ENCODE measurements at regions of chr6 and their contacts with region 1.

Region 1: GRCh38 chr6:116087437-116088027 is 13.1 kb upstream of the NT5DC1 start:
- DNase-seq: no peak
- H3K4me3 ChIP-seq: no peak overlapping the region
- CTCF ChIP-seq: no peak

Region 2: GRCh38 chr6:116010790-116011401 is 76.6 kb before region 1 on chr6:
- CTCF ChIA-PET with region 1: interaction called, 54 read pairs
- POLR2A ChIA-PET with region 1: no interaction called
- DNase-seq: peak; percentile 12
- H3K4me3 ChIP-seq: no peak overlapping the region
- CTCF ChIP-seq: peak; percentile 75

Region 3: GRCh38 chr6:116060572-116061283 is 26.8 kb before region 1 on chr6 and contains the start of gene FRK:
- CTCF ChIA-PET with region 1: interaction called, 15 read pairs
- POLR2A ChIA-PET with region 1: no interaction called
- DNase-seq: no peak
- H3K4me3 ChIP-seq: peak within 1 kb of the TSS; percentile 36
- CTCF ChIP-seq: no peak

Region 4: DNA sequence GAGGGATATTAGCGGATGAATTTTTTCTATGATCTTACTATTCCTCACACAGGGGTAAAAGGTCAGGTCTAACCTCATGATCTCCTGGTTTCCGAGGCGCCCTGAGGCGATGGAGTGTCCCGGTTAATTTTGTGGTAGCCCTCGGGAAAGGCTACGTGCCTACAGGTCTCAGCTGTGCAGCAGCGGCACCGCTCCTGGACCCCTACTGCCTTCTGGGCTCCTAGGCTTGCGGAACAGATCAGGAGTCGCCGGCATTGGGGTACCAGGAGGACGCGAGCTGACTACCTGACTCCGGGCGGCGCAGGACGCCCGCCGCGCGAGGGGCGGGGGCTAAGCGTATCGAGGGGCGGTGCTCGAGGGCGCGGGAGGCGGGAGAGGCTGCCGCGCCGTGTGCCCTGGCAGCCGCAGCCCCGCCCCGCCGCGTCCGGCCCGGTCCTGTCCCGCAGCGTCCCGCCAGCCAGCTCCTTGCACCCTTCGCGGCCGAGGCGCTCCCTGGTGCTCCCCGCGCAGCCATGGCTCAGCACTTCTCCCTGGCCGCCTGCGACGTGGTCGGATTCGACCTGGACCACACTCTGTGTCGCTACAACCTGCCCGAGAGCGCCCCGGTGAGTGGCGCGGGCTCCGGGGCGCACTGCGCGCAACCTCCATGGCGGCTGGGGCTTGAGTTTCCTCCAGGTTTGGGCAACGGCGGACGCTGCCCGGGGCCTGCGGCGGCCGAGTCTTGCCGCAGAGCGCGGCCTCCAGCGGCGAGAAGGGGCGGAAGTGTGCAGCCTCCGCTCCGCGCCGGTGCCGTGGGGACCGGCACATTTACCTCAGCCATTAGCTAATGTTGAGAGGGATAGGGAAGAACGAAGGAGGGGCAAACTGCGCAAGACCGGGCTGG is 13.1 kb after region 1 on chr6 and contains the start of gene NT5DC1:
- CTCF ChIA-PET with region 1: interaction called, 26 read pairs
- POLR2A ChIA-PET with region 1: interaction called, 7 read pairs
- DNase-seq: no peak
- H3K4me3 ChIP-seq: peak within 1 kb of the TSS; percentile 86
- CTCF ChIP-seq: peak; percentile 33

Region 5: DNA sequence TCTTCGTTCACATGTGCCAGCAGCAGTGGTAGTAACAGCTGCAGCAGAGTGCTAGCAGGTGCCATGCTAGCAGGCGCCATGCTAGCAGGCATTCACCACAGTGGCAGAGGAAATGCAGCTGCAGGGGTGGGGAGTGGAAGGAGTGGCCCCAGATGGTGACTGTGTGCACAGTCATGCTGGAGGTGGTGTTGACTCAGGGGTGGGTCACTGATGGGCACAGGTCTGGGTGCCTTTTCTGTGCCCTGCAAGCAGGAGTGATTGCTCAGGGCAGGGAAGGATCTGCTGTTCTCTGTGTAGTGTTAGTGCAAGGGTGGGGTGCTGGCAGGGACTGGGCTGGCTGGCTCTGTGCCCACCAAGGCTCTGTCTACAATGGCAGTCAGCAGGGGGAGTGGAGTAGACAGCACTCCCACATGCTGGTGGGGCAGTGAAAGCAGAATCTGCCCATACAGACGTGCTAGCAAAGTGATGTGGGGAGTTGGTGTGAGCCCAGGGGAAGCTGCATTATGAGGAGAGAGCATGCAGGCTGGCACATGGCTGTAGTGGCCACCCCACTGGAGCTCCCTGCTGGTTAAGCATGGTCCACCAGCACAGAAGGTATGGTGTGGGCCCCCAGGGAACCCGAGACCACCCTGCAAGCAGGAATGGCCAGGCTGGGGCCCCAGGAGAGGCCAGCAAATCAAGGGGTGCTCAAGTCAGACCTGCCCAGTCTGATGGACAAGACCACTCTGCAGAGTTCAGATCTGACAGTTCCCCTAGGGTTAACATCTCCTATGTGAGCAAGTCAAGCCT is 177.7 kb after region 1 on chr6:
- CTCF ChIA-PET with region 1: no interaction called
- POLR2A ChIA-PET with region 1: no interaction called
- DNase-seq: no peak
- H3K4me3 ChIP-seq: no peak overlapping the region
- CTCF ChIP-seq: no peak

Region 6: DNA sequence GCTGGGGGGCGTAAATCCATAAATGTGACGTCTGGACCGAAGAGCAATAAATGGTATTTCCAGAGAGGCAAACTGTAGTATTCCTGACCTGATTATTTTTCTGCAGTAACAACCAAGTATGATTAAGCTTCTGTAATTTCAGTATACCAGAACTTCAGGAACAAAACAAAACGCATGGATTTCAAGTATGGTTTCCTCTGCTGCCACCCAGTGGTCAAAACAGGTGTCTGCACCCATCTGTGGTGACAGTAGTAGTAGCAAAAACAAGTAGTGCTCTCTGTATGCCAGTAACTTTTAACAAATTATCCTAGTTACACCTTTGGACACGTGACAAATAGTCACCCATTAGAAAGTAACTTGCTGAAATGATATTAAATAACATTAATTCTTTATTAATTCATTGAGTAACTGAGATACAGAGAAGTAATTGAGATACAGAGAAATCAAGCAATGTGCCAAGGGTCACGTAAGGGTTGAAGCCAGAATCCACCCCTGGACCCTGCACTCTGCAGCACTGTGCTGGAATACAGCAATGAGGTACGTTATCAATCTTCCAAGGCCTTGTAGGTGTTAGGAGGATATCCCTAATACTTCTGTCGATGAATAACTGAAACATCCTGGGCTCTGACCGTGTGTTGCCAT is 474.0 kb after region 1 on chr6:
- CTCF ChIA-PET with region 1: no interaction called
- POLR2A ChIA-PET with region 1: no interaction called
- DNase-seq: no peak
- H3K4me3 ChIP-seq: no peak overlapping the region
- CTCF ChIP-seq: peak; percentile 70

Measured in AG04449 (cell line).